Right ventricle myocardium inferior (tissue), 1 donor: ENCODE measurements at regions of chr2 and their contacts with region 1.

Region 1: DNA sequence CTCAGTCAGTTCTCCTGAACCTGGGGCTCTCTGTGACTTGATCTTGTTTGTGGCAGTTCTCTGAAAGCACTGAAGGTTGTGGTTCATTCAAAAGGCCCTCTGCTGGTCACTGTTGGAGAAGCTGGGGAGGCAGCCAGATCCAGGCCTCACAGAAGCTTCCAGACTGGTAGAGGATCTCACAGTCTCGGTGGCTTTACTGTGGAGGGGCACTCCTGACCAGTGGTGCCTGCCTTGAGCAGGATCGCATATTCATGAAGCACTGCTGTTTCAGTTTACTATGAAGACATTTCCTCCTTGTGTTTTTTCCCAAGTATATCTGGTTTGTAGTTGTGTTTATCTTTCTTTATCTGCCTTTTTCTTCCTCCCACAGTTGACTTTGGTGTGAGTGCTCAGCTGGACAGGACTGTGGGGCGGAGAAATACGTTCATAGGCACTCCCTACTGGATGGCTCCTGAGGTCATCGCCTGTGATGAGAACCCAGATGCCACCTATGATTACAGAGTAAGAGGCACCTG is 133.9 kb downstream of the MAP4K4 start:
- DNase-seq: peak; percentile 73
- ATAC-seq: peak; percentile 80

Region 2: DNA sequence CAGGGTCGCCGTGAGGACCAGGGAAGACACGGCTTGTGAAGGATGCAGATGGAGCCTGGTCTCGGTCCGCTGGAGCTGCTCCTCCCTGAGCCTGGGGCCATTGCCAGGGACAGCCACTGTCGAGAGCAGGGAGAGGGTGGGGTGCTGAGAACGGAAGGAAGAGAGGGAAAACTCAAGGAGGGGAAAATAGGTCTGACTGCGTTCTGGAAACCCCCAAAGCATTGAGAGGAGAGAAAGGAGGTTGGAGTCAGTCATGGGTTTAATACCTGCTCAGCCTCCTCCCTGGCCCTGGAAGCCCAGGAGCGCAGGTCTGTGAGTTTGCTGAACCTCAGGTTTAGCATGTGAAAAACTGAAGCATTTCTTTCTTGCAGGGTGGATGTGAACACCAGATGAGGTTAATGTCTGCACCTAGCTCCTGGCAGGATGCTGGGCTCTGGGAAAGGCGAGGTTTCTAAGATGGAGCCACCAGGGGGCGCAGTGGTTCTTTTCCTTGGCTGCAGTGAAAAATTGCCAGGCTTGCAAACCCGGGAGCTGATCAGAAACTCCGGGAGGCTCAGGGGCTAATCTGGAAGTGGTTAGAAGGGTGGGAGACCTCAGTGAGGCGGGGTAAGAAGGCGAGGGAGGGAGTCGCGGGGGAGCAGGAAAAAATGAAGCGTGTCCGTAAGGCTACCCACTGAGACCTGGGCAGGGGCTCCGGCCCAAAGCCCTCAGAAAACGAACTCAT is 489.3 kb before region 1 on chr2:
- intact Hi-C with region 1: loop called (anchors 2 kb)
- DNase-seq: peak; percentile 83
- ATAC-seq: peak; percentile 44

Region 3: GRCh38 chr2:101419096-101419663 is 412.2 kb before region 1 on chr2:
- intact Hi-C with region 1: loop called (anchors 2 kb)
- DNase-seq: no peak
- ATAC-seq: peak; percentile 81

Region 4: GRCh38 chr2:101518578-101519492 is 312.6 kb before region 1 on chr2:
- intact Hi-C with region 1: loop called (anchors 2 kb)
- DNase-seq: no peak
- ATAC-seq: peak; percentile 75

Region 5: DNA sequence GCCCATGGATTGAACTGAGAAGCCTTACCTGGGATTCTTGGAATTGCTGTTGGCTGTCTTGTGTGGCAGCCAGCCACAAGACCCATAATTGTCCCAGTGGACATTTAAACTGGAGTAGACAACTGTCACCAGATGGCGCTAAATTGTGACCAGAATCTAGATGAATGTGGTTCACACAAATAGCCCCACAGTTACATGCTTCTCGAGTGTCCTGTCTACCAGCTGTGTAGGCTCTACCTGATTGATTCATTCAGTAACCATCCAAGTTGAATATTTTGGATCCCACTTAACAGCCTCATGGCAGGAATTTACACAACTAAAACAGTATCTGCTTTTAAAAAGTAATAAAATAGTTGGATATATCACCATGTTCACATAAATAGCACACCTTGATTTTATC is 60.7 kb before region 1 on chr2:
- intact Hi-C with region 1: no loop called
- DNase-seq: no peak
- ATAC-seq: peak; percentile 32